Endothelial cell of umbilical vein (primary cell): ENCODE measurements at regions of chr3 and their contacts with region 1.

Region 1: DNA sequence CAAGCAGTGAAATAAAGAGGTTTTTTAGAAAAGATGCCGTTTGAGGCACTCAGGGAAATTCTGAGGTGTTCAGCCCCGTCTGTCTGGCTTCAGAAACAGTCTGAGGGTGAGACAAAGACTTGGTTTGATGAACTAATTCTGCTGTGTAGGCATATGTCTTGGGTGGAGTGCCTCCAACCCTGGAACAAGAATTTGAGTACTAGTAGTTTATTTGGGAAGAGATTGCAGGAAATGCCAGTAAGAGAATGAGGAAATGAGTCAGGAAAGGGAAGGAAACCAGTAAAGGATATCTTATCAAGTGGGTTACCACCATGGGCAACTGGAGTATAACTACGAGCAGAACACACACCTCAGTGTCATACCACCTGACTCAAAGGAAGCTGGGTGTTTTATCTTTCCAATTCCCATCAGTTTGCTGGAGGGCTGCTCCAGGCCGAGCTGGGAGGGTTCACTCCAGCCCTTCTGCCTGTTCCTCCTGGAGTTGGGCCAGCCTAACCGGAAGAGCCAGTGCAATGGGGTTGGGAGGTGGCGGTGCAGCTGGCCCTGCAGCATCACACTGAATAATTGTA is 75.3 kb downstream of the TGFBR2 start:
- DNase-seq: peak; percentile 99
- H3K4me3 ChIP-seq: no peak overlapping the region
- H3K27ac ChIP-seq: peak overlapping the region; percentile 98
- H3K4me1 ChIP-seq: peaks cover 92% of the 10 kb centered on the region
- H3K27me3 ChIP-seq: no peaks in the 10 kb centered on the region
- CTCF ChIP-seq: no peak
- POLR2A ChIP-seq: peak; percentile 87

Region 2: GRCh38 chr3:30286007-30286669 is 395.6 kb before region 1 on chr3:
- CTCF ChIA-PET with region 1: no interaction called
- POLR2A ChIA-PET with region 1: no interaction called
- dilution Hi-C with region 1: no loop called
- intact Hi-C with region 1: loop called (anchors 1 kb)
- DNase-seq: peak; percentile 99
- H3K4me3 ChIP-seq: no peak overlapping the region
- H3K27ac ChIP-seq: peak overlapping the region; percentile 60
- H3K4me1 ChIP-seq: peaks cover 70% of the 10 kb centered on the region
- H3K27me3 ChIP-seq: no peaks in the 10 kb centered on the region
- CTCF ChIP-seq: no peak
- POLR2A ChIP-seq: peak; percentile 61

Region 3: GRCh38 chr3:30486368-30486767 is 195.4 kb before region 1 on chr3:
- CTCF ChIA-PET with region 1: no interaction called
- POLR2A ChIA-PET with region 1: interaction called, 10 read pairs
- dilution Hi-C with region 1: no loop called
- intact Hi-C with region 1: no loop called
- DNase-seq: no peak
- H3K4me3 ChIP-seq: no peak overlapping the region
- H3K27ac ChIP-seq: no peak overlapping the region
- H3K4me1 ChIP-seq: no peaks in the 10 kb centered on the region
- H3K27me3 ChIP-seq: no peaks in the 10 kb centered on the region
- CTCF ChIP-seq: no peak
- POLR2A ChIP-seq: no peak

Region 4: DNA sequence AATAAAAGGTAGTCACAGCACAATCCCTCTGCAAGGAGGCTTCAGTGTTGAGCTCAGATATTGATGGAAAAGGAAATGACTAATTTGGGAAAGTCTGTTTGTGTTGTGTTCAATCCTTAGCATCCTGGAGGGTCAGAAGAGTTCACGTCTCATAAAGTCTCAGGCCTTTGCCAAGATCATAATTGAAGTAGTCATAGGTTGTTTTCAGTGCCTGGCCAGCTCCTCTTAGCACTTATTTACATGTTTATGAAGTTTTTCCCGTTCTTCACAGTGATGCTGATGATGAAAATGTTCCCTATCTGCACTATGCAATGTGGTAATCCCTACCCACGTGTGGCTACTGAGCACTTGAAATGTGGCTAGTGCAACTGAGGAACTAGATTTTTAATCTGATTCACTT is 136.9 kb before region 1 on chr3:
- CTCF ChIA-PET with region 1: interaction called, 3 read pairs
- POLR2A ChIA-PET with region 1: no interaction called
- dilution Hi-C with region 1: no loop called
- intact Hi-C with region 1: loop called (anchors 1 kb)
- DNase-seq: peak; percentile 99
- H3K4me3 ChIP-seq: no peak overlapping the region
- H3K27ac ChIP-seq: peak overlapping the region; percentile 95
- H3K4me1 ChIP-seq: peaks cover 37% of the 10 kb centered on the region
- H3K27me3 ChIP-seq: no peaks in the 10 kb centered on the region
- CTCF ChIP-seq: no peak
- POLR2A ChIP-seq: no peak

Region 5: DNA sequence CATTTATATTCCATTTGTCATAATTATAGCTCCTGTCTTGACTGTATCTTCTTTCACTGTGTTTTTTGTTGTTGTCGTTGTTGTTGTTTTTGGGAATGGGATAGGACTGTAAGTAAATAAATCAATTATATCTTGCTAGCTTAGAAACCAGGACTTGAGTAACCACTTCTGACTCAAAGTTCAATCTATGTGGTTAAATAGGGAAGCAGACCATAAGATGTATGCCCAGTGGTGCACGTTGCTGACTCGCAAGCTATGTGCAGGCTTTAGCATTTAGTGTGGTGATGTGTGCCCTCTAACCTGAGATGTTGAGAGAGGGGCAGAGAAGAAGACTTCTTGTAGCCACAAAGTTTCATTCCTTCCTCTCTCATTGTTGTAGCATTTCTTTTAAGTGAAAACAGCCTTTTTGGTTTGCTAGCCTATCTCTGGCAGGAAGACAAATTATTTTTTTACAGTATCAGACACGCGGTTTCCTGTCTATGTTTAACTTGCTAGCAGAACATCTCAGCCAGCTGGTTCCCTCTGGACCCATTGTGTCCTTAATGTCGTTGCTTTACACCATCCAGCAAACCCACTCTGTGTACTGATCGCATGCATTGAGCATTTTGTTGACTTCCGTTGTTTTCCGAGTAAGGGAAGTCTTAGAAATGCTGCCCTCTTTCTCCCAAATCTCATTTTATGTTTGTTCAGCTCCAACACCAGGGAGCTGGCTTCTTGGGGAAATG is 23.2 kb before region 1 on chr3:
- CTCF ChIA-PET with region 1: interaction called, 18 read pairs
- POLR2A ChIA-PET with region 1: interaction called, 7 read pairs
- dilution Hi-C with region 1: no loop called
- intact Hi-C with region 1: loop called (anchors 1 kb)
- DNase-seq: peak; percentile 95
- H3K4me3 ChIP-seq: no peak overlapping the region
- H3K27ac ChIP-seq: peak overlapping the region; percentile 98
- H3K4me1 ChIP-seq: peaks cover 100% of the 10 kb centered on the region
- H3K27me3 ChIP-seq: no peaks in the 10 kb centered on the region
- CTCF ChIP-seq: no peak
- POLR2A ChIP-seq: peak; percentile 68

Region 6: DNA sequence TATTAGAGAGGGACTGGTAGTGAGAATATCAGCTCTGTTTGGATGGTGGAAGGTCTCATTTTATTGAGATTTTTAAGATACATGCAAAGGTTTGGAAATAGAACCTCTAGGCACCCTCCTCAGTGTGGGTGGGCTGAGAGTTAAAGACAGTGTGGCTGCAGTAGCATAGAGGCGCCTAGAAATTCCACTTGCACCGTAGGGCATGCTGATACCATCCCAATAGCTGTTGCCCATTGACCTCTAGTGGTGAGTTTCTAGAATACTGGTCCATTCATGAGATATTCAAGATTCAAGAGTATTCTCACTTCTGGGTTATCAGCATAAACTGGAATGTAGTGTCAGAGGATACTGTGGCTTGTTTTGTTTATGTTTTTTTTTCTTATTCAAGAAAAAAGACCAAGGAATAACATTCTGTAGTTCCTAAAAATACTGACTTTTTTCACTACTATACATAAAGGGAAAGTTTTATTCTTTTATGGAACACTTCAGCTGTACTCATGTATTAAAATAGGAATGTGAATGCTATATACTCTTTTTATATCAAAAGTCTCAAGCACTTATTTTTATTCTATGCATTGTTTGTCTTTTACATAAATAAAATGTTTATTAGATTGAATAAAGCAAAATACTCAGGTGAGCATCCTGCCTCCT is 11.9 kb after region 1 on chr3:
- CTCF ChIA-PET with region 1: interaction called, 26 read pairs
- POLR2A ChIA-PET with region 1: interaction called, 8 read pairs
- dilution Hi-C with region 1: no loop called
- intact Hi-C with region 1: loop called (anchors 1 kb)
- DNase-seq: peak; percentile 85
- H3K4me3 ChIP-seq: no peak overlapping the region
- H3K27ac ChIP-seq: peak overlapping the region; percentile 25
- H3K4me1 ChIP-seq: peaks cover 45% of the 10 kb centered on the region
- H3K27me3 ChIP-seq: no peaks in the 10 kb centered on the region
- CTCF ChIP-seq: peak; percentile 57 to 65
- POLR2A ChIP-seq: peak; percentile 24

Region 7: GRCh38 chr3:30871720-30872119 is 190.0 kb after region 1 on chr3:
- CTCF ChIA-PET with region 1: no interaction called
- POLR2A ChIA-PET with region 1: no interaction called
- dilution Hi-C with region 1: no loop called
- intact Hi-C with region 1: no loop called
- DNase-seq: no peak
- H3K4me3 ChIP-seq: no peak overlapping the region
- H3K27ac ChIP-seq: no peak overlapping the region
- H3K4me1 ChIP-seq: no peaks in the 10 kb centered on the region
- H3K27me3 ChIP-seq: peaks cover 10 to 11% of the 10 kb centered on the region in 2 experiments
- CTCF ChIP-seq: no peak
- POLR2A ChIP-seq: no peak